ENCODE measurements at regions of chr1 and their contacts with region 1.

Region 1: DNA sequence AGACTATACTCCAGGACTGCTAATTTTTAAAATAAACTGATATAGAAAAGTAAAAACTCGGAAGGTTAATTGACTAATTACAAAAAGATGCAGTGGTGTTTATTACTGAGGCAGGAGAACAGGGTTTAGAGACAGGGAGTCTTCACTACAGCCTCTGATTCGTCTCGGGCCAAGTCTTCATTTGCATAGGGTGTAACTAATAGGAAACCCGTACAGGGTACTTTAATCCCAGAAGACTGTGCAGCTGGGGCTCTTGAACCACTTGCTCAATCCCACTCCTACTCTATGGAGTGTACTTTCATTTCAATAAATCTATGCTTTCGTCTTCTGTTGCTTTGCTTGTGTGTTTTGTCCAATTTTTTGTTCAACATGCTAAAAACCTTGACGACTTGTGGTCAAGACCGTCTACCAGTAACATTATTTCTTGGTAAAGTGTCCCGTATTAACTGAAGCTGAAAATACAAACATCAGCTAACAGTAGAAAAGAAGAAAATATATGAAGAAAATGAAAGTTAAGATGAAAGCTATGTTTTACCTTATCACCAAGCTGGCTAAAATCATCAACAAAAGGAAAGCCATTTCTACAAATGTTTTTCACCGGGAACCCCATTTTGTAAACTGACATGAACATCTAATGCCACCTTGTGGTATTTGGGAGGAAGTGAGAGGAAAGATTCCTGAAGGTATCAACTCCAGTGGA is 8.0 kb downstream of the SDHB start:
- DNase-seq: peak; percentile 49
- CTCF ChIP-seq: peak; percentile 43

Region 2: DNA sequence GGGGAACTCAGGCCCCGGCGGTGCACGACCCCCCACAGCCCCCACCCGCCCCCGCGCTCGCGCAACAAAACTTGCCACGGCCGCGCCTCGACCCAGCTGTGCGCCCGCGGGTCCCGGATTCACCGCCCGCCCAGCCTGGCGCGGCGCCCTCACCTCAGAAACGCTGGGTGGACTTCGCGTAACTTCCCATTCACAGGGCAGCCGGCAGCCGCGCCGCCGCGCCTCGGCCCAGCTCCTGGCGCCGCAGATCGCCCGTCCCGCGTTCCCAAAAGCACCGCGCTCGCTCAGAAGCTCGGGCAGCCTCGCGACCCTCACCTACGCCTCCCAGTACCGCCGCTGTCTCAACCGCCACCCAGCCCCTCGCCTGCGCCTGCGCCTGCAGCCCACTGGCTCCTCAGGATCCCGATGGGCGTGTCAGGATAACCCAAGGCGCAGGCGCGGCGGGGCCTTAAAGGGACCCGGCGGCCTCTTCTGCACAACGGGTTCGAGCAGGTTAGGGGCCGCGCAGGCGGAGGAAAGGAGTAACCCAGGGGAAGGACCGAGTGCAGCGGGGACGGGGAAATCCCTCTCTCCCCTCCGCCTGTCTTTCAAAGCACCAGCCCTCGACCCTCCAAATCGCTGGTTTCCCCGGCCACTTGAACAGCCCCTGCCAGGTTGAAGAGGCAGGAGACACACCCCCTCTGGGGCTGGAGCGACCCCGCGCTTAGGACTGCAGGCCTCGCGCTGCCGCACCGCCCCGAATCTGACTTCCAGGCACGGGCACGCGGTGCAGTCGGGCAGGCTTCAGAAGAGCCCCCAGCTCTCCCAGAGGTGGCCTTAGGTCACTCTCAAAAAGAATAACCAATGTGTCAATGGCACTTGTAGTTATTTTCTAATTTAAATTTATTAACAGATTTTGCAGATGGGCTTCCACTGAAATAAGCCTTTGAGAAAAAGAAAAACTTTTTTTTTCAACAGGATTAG is 432.3 kb before region 1 on chr1 and contains the start of gene NBPF1:
- in situ Hi-C with region 1: no loop called
- DNase-seq: peak; percentile 100
- CTCF ChIP-seq: no peak

Region 3: GRCh38 chr1:16960560-16961296 is 85.1 kb before region 1 on chr1:
- in situ Hi-C with region 1: loop called (anchors 10 kb)
- DNase-seq: peak; percentile 82
- CTCF ChIP-seq: peak; percentile 91